ENCODE measurements at regions of chr15 and their contacts with region 1.

Region 1: GRCh38 chr15:50134520-50135024 is 15.5 kb upstream of the ATP8B4 start:
- DNase-seq: no peak
- H3K4me3 Mint-ChIP-seq: peak overlapping the region; percentile 1
- H3K27ac Mint-ChIP-seq: peak overlapping the region; percentile 92
- H3K4me1 Mint-ChIP-seq: peaks cover 52% of the 10 kb centered on the region
- H3K27me3 Mint-ChIP-seq: peaks cover 4% of the 10 kb centered on the region

Region 2: GRCh38 chr15:48963524-48964113 is 1171.0 kb before region 1 on chr15 and contains the start of gene SHC4:
- CTCF ChIA-PET with region 1: no interaction called
- intact Hi-C with region 1: loop called (anchors 10 kb)
- DNase-seq: peak; percentile 14
- H3K4me3 Mint-ChIP-seq: peak within 1 kb of the TSS; percentile 69
- H3K27ac Mint-ChIP-seq: no peak within 1 kb of the TSS
- H3K4me1 Mint-ChIP-seq: peaks cover 31% of the 10 kb centered on the region
- H3K27me3 Mint-ChIP-seq: peaks cover 52% of the 10 kb centered on the region
- total RNA-seq, gene SHC4: 0.21 to 0.25 TPM

Region 3: GRCh38 chr15:49769225-49769624 is 365.3 kb before region 1 on chr15:
- CTCF ChIA-PET with region 1: no interaction called
- intact Hi-C with region 1: no loop called
- DNase-seq: no peak
- H3K4me3 Mint-ChIP-seq: no peak overlapping the region
- H3K27ac Mint-ChIP-seq: no peak overlapping the region
- H3K4me1 Mint-ChIP-seq: no peaks in the 10 kb centered on the region
- H3K27me3 Mint-ChIP-seq: peaks cover 3% of the 10 kb centered on the region

Region 4: GRCh38 chr15:49990835-49991545 is 143.6 kb before region 1 on chr15:
- CTCF ChIA-PET with region 1: no interaction called
- intact Hi-C with region 1: no loop called
- DNase-seq: no peak
- H3K4me3 Mint-ChIP-seq: no peak overlapping the region
- H3K27ac Mint-ChIP-seq: no peak overlapping the region
- H3K4me1 Mint-ChIP-seq: no peaks in the 10 kb centered on the region
- H3K27me3 Mint-ChIP-seq: no peaks in the 10 kb centered on the region

Region 5: DNA sequence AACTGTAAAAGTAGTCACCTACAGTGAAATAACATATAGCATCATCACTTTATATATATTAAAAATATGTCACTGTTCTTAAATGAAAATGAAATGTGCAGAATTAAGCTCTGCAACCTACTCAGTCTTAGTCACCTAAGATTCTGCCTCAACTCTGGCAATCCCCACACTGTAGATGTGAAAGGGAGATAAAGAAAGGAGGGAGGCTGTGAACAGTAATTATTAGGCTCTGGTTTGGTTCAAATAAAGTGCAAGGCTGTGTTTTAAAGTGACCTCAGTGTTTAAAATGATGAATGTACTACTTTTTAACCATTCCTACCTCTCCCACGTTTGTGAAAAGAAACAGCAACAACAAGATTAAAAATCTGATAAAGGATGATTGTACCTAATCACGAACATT is 87.7 kb before region 1 on chr15:
- CTCF ChIA-PET with region 1: interaction called, 3 read pairs
- intact Hi-C with region 1: loop called (anchors 1 kb)
- DNase-seq: no peak
- H3K4me3 Mint-ChIP-seq: no peak overlapping the region
- H3K27ac Mint-ChIP-seq: no peak overlapping the region
- H3K4me1 Mint-ChIP-seq: peaks cover 11% of the 10 kb centered on the region
- H3K27me3 Mint-ChIP-seq: peaks cover 6% of the 10 kb centered on the region

Region 6: GRCh38 chr15:50145451-50145872 is 10.9 kb after region 1 on chr15:
- CTCF ChIA-PET with region 1: interaction called, 10 read pairs
- intact Hi-C with region 1: no loop called
- DNase-seq: no peak
- H3K4me3 Mint-ChIP-seq: no peak overlapping the region
- H3K27ac Mint-ChIP-seq: no peak overlapping the region
- H3K4me1 Mint-ChIP-seq: peaks cover 13% of the 10 kb centered on the region
- H3K27me3 Mint-ChIP-seq: no peaks in the 10 kb centered on the region

Region 7: DNA sequence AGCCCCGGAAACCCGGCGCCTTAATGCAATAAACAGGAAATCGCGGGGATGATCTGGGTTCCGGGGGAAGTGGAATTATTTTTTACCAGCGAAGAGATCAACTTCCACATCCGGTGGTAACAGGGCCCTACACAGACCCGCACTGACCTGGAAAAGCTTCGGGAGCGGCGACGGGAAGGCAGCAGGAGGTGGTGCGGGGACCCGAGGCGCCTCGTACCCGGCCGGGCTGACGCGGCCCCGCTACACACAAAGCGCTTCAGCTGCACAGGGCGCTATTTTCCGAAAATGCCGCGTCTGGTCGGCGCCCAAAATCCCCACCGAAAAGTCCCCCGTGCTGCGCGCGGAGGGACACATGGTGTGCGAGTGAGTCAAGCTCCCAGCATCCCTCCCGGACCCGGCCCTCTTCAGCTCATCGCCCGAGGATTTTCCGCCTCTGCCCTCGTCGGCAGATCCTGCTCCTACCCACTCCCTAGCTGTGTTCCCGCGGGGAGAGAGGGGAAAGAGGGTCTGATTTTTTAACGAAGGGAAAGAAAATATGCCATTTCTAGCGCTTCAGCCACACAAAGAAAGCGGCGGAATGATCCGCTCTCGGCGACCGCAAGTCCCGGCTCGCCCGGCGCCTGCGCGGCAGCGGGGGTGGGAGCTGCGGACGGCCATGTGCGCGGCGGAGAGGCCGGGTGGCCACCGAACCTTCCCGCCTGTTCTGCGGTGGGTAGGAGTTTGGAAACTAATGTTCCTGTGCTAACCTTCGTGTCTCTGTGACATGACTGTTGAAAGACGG is 220.5 kb after region 1 on chr15 and contains the start of gene GABPB1:
- CTCF ChIA-PET with region 1: no interaction called
- intact Hi-C with region 1: loop called (anchors 1 kb)
- DNase-seq: peak; percentile 90
- H3K4me3 Mint-ChIP-seq: peak within 1 kb of the TSS; percentile 98
- H3K27ac Mint-ChIP-seq: peak within 1 kb of the TSS; percentile 100
- H3K4me1 Mint-ChIP-seq: peaks cover 50% of the 10 kb centered on the region
- H3K27me3 Mint-ChIP-seq: no peaks in the 10 kb centered on the region
- total RNA-seq, gene GABPB1: 48.2 to 53.5 TPM

Region 8: DNA sequence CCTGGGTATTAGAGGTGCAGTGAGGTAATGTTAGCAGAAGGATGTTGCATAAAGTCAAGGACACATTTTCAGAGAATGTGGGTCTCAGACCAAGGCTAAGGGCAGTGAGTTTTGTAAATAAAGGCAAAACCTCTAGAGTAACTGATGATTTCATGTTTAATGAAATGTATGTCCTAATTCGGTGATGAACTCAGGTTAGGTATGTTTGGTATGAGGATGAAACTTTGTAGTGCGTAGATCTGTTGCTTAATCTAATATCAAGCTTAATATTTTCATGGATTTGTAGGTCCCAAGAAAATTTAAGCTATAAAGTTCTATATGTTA is 408.3 kb after region 1 on chr15:
- CTCF ChIA-PET with region 1: no interaction called
- intact Hi-C with region 1: no loop called
- DNase-seq: no peak
- H3K4me3 Mint-ChIP-seq: no peak overlapping the region
- H3K27ac Mint-ChIP-seq: no peak overlapping the region
- H3K4me1 Mint-ChIP-seq: no peaks in the 10 kb centered on the region
- H3K27me3 Mint-ChIP-seq: peaks cover 2% of the 10 kb centered on the region

Region 9: DNA sequence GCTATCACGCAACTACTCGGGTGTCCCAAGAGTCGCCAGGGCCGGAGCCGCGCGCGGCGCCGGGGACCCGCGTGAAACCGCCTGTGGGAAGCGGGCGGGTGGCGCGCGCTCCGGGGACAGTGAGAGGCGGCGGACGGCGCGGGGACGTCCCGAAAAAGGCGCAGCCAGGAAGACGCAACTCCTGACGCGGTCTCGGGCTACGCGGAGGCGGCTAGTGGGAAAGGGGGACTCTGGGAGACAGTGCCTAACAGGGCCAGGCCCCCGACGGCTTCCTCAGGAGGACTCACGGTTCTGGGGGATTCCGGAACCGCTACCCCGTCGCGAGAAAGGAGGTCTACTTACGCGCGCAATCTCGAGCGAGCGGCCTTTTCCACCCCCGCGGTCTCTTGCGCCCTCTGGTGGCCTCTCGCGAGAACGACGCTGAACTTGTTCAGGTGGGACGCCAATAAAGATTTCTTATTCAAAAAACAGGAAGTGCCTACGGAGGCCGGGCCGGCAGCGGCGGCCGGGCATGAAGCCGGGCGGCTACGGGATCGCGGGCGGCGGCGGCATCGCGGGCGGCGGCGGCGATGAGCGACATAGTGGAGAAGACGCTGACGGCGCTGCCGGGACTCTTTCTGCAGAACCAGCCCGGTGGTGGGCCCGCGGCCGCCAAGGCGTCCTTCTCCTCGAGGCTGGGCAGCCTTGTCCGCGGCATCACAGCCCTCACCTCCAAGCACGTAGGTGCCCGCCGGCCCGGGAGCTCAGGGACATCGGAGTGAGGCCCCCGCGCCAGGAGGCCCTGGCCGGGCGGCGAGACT is 773.8 kb after region 1 on chr15 and contains the start of gene AP4E1:
- CTCF ChIA-PET with region 1: no interaction called
- intact Hi-C with region 1: loop called (anchors 1 kb)
- DNase-seq: peak; percentile 94
- H3K4me3 Mint-ChIP-seq: peak within 1 kb of the TSS; percentile 92
- H3K27ac Mint-ChIP-seq: peak within 1 kb of the TSS; percentile 99
- H3K4me1 Mint-ChIP-seq: peaks cover 25% of the 10 kb centered on the region
- H3K27me3 Mint-ChIP-seq: no peaks in the 10 kb centered on the region
- total RNA-seq, gene AP4E1: 6.8 to 9.4 TPM

Measured in activated naive CD4-positive, alpha-beta T cell treated with anti-CD3 and anti-CD28 coated beads for 36 hours (primary cell).